Activated CD4-positive, alpha-beta memory T cell treated with anti-CD3 and anti-CD28 coated beads for 36 hours (primary cell): ENCODE measurements at regions of chr4 and their contacts with region 1.

Region 1: GRCh38 chr4:55546756-55547465 is at the start of gene CLOCK:
- DNase-seq: peak; percentile 88
- H3K4me3 Mint-ChIP-seq: peak within 1 kb of the TSS; percentile 88
- H3K27ac Mint-ChIP-seq: peak within 1 kb of the TSS; percentile 86
- H3K4me1 Mint-ChIP-seq: peaks cover 52% of the 10 kb centered on the region
- H3K27me3 Mint-ChIP-seq: peaks cover 5% of the 10 kb centered on the region
- total RNA-seq, gene CLOCK: 10.9 to 12.0 TPM

Region 2: GRCh38 chr4:54902271-54902670 is 644.6 kb before region 1 on chr4:
- CTCF ChIA-PET with region 1: no interaction called
- POLR2A ChIA-PET with region 1: no interaction called
- intact Hi-C with region 1: no loop called
- DNase-seq: no peak
- H3K4me3 Mint-ChIP-seq: no peak overlapping the region
- H3K27ac Mint-ChIP-seq: no peak overlapping the region
- H3K4me1 Mint-ChIP-seq: peaks cover 5% of the 10 kb centered on the region
- H3K27me3 Mint-ChIP-seq: peaks cover 2% of the 10 kb centered on the region

Region 3: GRCh38 chr4:54941994-54942552 is 604.8 kb before region 1 on chr4:
- CTCF ChIA-PET with region 1: no interaction called
- POLR2A ChIA-PET with region 1: no interaction called
- intact Hi-C with region 1: loop called (anchors 5 kb)
- DNase-seq: peak; percentile 58
- H3K4me3 Mint-ChIP-seq: peak overlapping the region; percentile 47
- H3K27ac Mint-ChIP-seq: peak overlapping the region; percentile 72
- H3K4me1 Mint-ChIP-seq: peaks cover 44% of the 10 kb centered on the region
- H3K27me3 Mint-ChIP-seq: no peaks in the 10 kb centered on the region

Region 4: GRCh38 chr4:55321707-55322264 is 225.1 kb before region 1 on chr4:
- CTCF ChIA-PET with region 1: interaction called, 3 read pairs
- POLR2A ChIA-PET with region 1: no interaction called
- intact Hi-C with region 1: loop called (anchors 1 kb)
- DNase-seq: peak; percentile 72
- H3K4me3 Mint-ChIP-seq: no peak overlapping the region
- H3K27ac Mint-ChIP-seq: no peak overlapping the region
- H3K4me1 Mint-ChIP-seq: peaks cover 29% of the 10 kb centered on the region
- H3K27me3 Mint-ChIP-seq: peaks cover 2% of the 10 kb centered on the region

Region 5: DNA sequence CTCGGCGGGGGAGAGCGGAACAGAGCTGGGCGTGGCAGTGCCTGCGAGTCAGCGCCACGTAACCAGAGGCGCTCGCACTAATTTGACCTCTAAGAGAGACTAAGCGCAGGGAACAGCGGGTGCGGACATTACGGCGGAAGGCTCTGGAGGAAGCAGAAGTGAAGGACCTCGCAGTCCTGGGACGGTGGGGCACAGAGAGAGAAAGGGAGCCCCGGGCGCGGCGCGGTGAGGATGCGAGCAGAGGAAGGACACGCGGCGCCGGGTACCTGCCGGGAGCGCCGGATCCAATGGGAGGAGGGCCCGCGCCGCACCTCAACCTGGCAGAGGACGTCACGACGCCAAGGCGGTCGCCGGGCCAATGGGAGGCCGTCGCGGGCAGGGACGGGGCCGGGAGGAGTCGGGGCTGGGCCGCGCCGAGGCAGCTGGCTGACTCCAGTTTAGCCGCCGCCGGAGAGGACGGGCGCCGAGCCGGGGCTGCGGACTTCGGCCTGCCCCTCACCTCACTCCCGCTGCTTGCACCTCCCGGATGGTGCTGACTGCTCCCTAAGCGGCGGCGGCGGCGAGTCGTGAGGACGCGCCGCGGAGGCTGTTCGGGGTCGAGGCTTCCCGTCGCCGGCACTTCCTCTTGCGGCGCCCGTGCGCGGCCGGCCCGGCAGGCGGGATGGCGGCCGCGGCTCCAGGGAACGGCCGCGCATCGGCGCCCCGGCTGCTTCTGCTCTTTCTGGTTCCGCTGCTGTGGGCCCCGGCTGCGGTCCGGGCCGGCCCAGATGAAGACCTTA is 151.2 kb before region 1 on chr4 and contains the start of gene TMEM165:
- CTCF ChIA-PET with region 1: interaction called, 6 read pairs
- POLR2A ChIA-PET with region 1: interaction called, 7 read pairs
- intact Hi-C with region 1: loop called (anchors 1 kb)
- DNase-seq: peak; percentile 94
- H3K4me3 Mint-ChIP-seq: peak within 1 kb of the TSS; percentile 90
- H3K27ac Mint-ChIP-seq: peak within 1 kb of the TSS; percentile 93
- H3K4me1 Mint-ChIP-seq: peaks cover 30% of the 10 kb centered on the region
- H3K27me3 Mint-ChIP-seq: no peaks in the 10 kb centered on the region
- total RNA-seq, gene TMEM165: 50.4 to 56.8 TPM

Region 6: GRCh38 chr4:55435141-55435841 is 111.6 kb before region 1 on chr4:
- CTCF ChIA-PET with region 1: interaction called, 4 read pairs
- POLR2A ChIA-PET with region 1: no interaction called
- intact Hi-C with region 1: loop called (anchors 1 kb)
- DNase-seq: peak; percentile 63
- H3K4me3 Mint-ChIP-seq: no peak overlapping the region
- H3K27ac Mint-ChIP-seq: peak overlapping the region; percentile 35
- H3K4me1 Mint-ChIP-seq: peaks cover 15% of the 10 kb centered on the region
- H3K27me3 Mint-ChIP-seq: no peaks in the 10 kb centered on the region

Region 7: GRCh38 chr4:55458164-55458563 is 88.7 kb before region 1 on chr4:
- CTCF ChIA-PET with region 1: no interaction called
- POLR2A ChIA-PET with region 1: no interaction called
- intact Hi-C with region 1: no loop called
- DNase-seq: no peak
- H3K4me3 Mint-ChIP-seq: no peak overlapping the region
- H3K27ac Mint-ChIP-seq: no peak overlapping the region
- H3K4me1 Mint-ChIP-seq: no peaks in the 10 kb centered on the region
- H3K27me3 Mint-ChIP-seq: no peaks in the 10 kb centered on the region

Region 8: GRCh38 chr4:55853484-55854046 is 306.7 kb after region 1 on chr4 and contains the start of gene EXOC1:
- CTCF ChIA-PET with region 1: interaction called, 3 read pairs
- POLR2A ChIA-PET with region 1: no interaction called
- intact Hi-C with region 1: loop called (anchors 1 kb)
- DNase-seq: peak; percentile 99
- H3K4me3 Mint-ChIP-seq: peak within 1 kb of the TSS; percentile 7
- H3K27ac Mint-ChIP-seq: peak within 1 kb of the TSS; percentile 82
- H3K4me1 Mint-ChIP-seq: peaks cover 33% of the 10 kb centered on the region
- H3K27me3 Mint-ChIP-seq: no peaks in the 10 kb centered on the region
- total RNA-seq, gene EXOC1: 21.9 to 22.4 TPM